Naive thymus-derived CD4-positive, alpha-beta T cell (primary cell): ENCODE measurements at regions of chr9 and their contacts with region 1.

Region 1: DNA sequence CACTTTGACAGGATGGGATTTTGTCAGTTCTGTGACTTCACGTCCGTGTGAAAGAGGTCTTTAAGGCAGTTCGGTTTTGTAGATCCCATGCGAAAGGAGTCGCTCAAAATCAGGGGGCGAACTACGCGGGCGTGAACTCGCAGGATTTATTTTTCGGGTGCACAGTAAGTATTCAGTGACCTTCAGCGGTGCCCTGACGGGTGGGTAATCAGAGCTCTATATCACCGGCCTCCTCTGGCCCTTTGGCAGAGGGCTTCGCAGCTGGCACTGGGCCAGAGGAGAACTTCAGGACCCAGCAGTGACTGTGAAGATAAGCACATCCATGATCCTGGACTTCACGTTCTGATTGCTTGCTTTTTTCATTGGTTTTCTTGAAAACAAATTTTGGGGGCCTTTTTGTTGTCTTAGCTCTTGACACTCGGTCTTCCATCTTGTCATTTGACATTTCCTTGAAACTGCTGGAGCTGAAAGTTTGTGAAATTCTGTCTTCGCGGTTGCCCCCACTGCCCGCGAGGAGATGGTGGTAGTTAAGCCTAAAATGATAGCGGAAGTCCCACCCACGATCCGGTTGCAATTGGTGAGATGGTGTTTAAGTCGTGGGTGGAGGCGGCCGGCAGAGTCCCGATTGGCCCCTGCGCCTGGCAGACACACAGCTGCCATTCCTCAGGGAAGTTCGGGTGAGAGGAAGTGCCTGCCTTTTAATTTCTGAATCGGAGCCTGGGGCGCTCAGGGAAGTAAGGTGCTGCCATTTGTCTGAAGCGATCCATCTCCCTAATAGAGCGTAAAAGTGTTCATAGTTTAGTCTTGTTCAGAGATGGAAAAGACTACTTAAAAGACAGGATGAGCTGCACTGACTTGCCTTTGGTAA is at the start of gene FAM120AOS:
- DNase-seq: peak; percentile 50 to 85 (median 76)
- ATAC-seq: peak; percentile 82
- H3K4me3 ChIP-seq: peak within 1 kb of the TSS; percentile 72
- H3K4me3 Mint-ChIP-seq: peak within 1 kb of the TSS; percentile 89 to 100 (median 95)
- H3K27ac ChIP-seq: peak within 1 kb of the TSS; percentile 87
- H3K27ac Mint-ChIP-seq: peak within 1 kb of the TSS; percentile 83 to 96 (median 94)
- H3K4me1 ChIP-seq: peaks cover 31 to 50% of the 10 kb centered on the region in 2 donors
- H3K4me1 Mint-ChIP-seq: peaks cover 39 to 69% (median 57%) of the 10 kb centered on the region in 7 donors
- H3K27me3 ChIP-seq: no peaks in the 10 kb centered on the region
- H3K27me3 Mint-ChIP-seq: no peaks in the 10 kb centered on the region
- total RNA-seq, gene FAM120AOS: 36.7 to 49.5 (median 42.3) TPM

Region 2: DNA sequence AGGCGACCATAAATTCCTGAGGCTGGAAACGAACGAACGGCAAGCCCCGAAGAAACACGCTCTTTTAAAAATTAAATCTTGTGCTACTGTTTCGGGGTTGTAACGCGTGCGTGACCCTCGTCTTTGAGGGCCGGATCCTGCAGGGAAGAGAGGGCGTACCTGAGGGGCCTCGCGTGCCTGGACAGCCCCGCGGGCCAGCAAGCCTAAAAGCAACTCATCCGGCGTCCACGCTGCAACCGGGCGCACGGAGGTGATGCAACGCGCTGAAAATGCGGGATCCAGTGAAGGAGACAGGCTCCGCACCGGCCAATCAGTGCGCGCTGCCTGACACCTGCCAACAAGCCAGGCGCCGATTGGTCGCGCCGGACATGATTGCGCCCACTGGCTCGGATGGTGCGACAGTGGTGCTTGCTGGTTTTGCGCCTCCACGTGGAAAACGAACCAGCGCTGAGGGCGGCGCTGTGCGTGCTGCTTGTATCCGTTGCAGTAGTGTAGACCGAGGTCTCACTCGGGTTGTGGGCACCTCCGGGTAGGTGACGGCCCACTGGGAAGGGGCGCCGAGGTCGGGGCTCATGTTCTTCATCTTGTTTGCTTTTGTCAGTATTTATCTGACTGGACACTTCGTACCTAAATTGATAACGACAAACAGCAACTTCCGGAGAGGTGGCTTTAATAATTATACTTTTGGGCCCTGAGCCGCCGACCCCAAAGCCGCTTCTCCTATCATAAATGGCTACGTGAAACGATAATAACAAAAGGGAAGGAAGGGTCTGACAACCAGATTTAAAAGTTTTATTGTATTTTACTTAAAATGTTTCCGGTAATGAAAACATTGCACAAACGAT is 1159.6 kb before region 1 on chr9 and contains the start of gene IARS1:
- CTCF ChIA-PET with region 1: no interaction called
- POLR2A ChIA-PET with region 1: no interaction called
- intact Hi-C with region 1: loop called in 1 of 2 experiments (anchors 5 kb)
- DNase-seq: peak; percentile 97 to 100 (median 100)
- ATAC-seq: peak; percentile 98
- H3K4me3 ChIP-seq: peak within 1 kb of the TSS; percentile 61
- H3K4me3 Mint-ChIP-seq: peak within 1 kb of the TSS; percentile 85 to 99 (median 98)
- H3K27ac ChIP-seq: peak within 1 kb of the TSS; percentile 78
- H3K27ac Mint-ChIP-seq: peak within 1 kb of the TSS; percentile 95 to 100 (median 98)
- H3K4me1 ChIP-seq: peaks cover 17 to 33% of the 10 kb centered on the region in 2 donors
- H3K4me1 Mint-ChIP-seq: peaks cover 23 to 68% (median 62%) of the 10 kb centered on the region in 7 donors
- H3K27me3 ChIP-seq: no peaks in the 10 kb centered on the region
- H3K27me3 Mint-ChIP-seq: no peaks in the 10 kb centered on the region
- total RNA-seq, gene IARS1: 52.4 to 145 (median 97.7) TPM

Region 3: DNA sequence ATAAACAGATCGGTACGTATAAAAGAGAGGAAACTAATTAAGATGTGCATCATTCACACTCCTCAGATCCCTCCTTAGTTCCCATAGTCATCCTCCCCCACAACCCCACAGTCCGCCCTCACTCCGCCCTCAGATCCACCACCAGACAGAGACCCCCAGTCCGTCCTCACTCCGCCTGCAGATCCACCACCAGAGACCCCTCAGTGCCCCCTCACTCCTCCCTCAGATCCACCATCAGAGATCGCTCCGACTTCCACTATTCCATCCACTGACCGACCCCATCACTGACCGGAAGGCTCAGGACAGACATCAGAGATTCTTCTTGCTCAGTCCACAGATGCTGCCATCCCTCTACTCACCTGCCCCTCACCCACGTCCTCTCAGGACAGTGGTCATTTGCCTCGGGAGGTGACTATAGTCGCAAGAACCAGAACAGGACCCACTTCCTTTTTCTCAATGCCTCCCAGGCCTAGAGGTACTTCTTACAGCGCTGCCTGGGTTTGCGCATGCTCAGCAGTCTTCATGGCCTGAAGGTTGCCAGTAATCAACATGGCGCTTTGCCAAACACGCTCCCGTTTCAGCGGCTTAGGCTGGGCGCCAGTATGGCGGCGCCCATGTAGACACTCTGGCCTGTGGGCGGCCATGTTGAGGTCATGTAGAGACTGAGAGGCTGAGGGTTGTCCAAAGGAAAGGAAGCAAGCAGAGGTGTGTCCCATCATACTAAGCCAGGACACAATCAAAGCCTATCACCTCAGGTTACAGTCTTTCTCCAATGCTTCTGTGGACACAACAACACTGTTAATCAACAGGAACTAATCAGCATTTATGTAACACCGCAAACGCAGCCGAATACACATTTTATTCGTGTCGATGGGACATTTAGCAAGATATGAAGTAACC is 575.5 kb before region 1 on chr9 and contains the start of gene ZNF484:
- CTCF ChIA-PET with region 1: no interaction called
- POLR2A ChIA-PET with region 1: no interaction called
- intact Hi-C with region 1: loop called in 1 of 2 experiments (anchors 5 kb)
- DNase-seq: peak; percentile 86 to 97 (median 94)
- ATAC-seq: peak; percentile 99
- H3K4me3 ChIP-seq: peak within 1 kb of the TSS; percentile 77
- H3K4me3 Mint-ChIP-seq: peak within 1 kb of the TSS; percentile 91 to 100 (median 99)
- H3K27ac ChIP-seq: peak within 1 kb of the TSS; percentile 90
- H3K27ac Mint-ChIP-seq: peak within 1 kb of the TSS; percentile 94 to 100 (median 99)
- H3K4me1 ChIP-seq: peaks cover 0 to 15% of the 10 kb centered on the region in 2 donors
- H3K4me1 Mint-ChIP-seq: peaks cover 28 to 69% (median 58%) of the 10 kb centered on the region in 7 donors
- H3K27me3 ChIP-seq: no peaks in the 10 kb centered on the region
- H3K27me3 Mint-ChIP-seq: no peaks in the 10 kb centered on the region
- total RNA-seq, gene ZNF484: 12.4 to 25.4 (median 14.0) TPM

Region 4: DNA sequence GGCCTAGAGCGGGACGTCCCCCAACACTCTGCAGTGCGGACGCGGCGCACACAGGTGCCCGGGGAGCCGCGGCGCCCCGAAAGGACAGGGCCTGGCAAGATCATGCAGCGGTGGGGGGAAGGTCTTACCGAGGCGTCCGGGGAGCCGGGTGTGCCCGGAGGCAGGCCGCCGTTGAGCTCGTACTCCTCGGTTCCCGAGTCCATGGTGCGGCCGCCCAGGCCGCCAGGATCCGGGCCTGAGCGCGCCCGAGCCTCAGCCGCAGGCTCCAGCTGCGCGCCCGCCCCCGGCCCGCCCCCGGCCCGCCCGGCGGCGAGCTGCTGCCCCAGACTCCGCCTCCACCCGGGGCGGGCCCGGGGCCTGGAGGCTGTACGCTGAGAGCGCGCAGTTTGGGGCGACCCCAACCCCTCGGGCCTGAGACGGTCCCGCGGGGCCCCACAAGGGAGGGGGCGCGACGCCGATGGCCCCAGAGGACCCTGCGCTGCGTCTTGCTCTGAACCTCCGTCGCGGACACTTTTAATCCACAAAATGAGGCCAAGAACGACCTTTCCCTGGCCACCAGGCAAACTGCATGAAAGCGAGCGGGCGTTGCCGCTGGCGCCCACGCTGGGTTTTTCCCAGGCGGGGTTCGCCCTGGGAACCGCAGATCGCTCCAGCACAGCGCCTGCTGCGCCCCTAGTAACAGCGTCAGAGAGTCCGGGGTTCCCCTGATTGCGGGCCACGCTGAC is 319.1 kb before region 1 on chr9 and contains the start of gene NINJ1:
- CTCF ChIA-PET with region 1: no interaction called
- POLR2A ChIA-PET with region 1: no interaction called
- intact Hi-C with region 1: loop called (anchors 5 to 10 kb)
- DNase-seq: peak; percentile 72 to 93 (median 83)
- ATAC-seq: peak; percentile 87
- H3K4me3 ChIP-seq: peak within 1 kb of the TSS; percentile 68
- H3K4me3 Mint-ChIP-seq: peak within 1 kb of the TSS; percentile 87 to 92 (median 90)
- H3K27ac ChIP-seq: peak within 1 kb of the TSS; percentile 99
- H3K27ac Mint-ChIP-seq: peak within 1 kb of the TSS; percentile 84 to 98 (median 98)
- H3K4me1 ChIP-seq: peaks cover 27 to 55% of the 10 kb centered on the region in 2 donors
- H3K4me1 Mint-ChIP-seq: peaks cover 40 to 80% (median 63%) of the 10 kb centered on the region in 7 donors
- H3K27me3 ChIP-seq: no peaks in the 10 kb centered on the region
- H3K27me3 Mint-ChIP-seq: no peaks in the 10 kb centered on the region
- total RNA-seq, gene NINJ1: 30.7 to 163 (median 64.7) TPM

Region 5: GRCh38 chr9:93501406-93501805 is 48.1 kb after region 1 on chr9:
- CTCF ChIA-PET with region 1: no interaction called
- POLR2A ChIA-PET with region 1: no interaction called
- intact Hi-C with region 1: loop called (anchors 2 kb)
- DNase-seq: peak in 6 of 9 donors; percentile 8 to 37 (median 19)
- ATAC-seq: no peak
- H3K4me3 ChIP-seq: peak overlapping the region; percentile 51
- H3K4me3 Mint-ChIP-seq: peak overlapping the region; percentile 88 to 97 (median 91)
- H3K27ac ChIP-seq: peak overlapping the region; percentile 59
- H3K27ac Mint-ChIP-seq: peak overlapping the region; percentile 83 to 97 (median 91)
- H3K4me1 ChIP-seq: peaks cover 11 to 14% of the 10 kb centered on the region in 2 donors
- H3K4me1 Mint-ChIP-seq: peaks cover 33 to 73% (median 59%) of the 10 kb centered on the region in 7 donors
- H3K27me3 ChIP-seq: no peaks in the 10 kb centered on the region
- H3K27me3 Mint-ChIP-seq: no peaks in the 10 kb centered on the region